ENCODE measurements at regions of chr9 and their contacts with region 1.

Region 1: DNA sequence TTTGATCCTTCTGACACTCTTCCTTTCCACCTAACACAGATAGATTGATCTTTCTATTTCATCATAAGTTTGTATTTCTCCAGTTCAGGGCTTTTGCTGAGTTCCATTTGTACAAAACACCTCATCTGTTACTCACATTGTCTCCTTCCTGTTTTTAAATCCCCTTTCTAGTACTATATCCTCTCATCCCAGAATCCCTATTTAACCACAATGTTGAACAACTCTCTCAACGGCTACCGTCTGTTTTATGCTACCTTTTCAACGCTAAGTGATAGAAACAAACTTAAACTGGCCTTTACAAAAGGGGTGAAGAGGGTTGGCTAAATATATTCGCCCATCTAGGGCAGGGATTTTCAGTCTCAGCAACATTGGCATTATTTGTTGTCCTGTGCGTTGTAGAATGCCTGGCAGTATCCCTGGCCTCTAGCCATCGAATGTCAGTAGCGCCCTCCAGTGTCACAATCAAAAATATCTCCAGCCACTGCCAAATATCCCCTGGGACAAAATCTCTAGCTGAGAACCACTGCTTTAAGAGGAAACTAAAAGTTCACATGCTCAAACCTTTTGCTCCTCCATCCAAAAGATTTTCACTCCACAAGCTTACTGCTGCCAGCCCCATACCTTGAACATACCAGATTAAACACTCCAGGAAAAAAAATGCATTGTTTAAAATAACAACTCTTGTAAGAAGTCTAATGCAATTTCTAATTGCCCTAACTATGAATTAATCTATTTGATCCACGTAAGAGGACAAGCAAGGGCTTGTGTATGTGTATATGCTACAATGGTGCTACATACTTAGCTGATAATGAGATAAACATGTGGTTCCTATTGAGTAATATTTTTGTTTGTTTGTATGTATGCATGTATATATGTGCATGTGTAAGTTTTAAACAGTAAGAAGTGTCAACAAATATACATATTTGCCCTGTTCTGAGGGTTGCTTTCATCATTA is 344.0 kb downstream of the PTPRD start:
- DNase-seq: peak; percentile 56
- H3K4me3 Mint-ChIP-seq: no peak overlapping the region
- H3K27ac Mint-ChIP-seq: no peak overlapping the region
- H3K4me1 Mint-ChIP-seq: no peaks in the 10 kb centered on the region
- H3K27me3 Mint-ChIP-seq: peaks cover 27% of the 10 kb centered on the region
- CTCF ChIP-seq: peak; percentile 39

Region 2: GRCh38 chr9:9998491-9999287 is 270.1 kb before region 1 on chr9:
- CTCF ChIA-PET with region 1: interaction called, 4 read pairs
- POLR2A ChIA-PET with region 1: no interaction called
- intact Hi-C with region 1: loop called (anchors 2 kb)
- DNase-seq: peak; percentile 36
- H3K4me3 Mint-ChIP-seq: no peak overlapping the region
- H3K27ac Mint-ChIP-seq: no peak overlapping the region
- H3K4me1 Mint-ChIP-seq: no peaks in the 10 kb centered on the region
- H3K27me3 Mint-ChIP-seq: peaks cover 72% of the 10 kb centered on the region
- CTCF ChIP-seq: peak; percentile 35

Region 3: DNA sequence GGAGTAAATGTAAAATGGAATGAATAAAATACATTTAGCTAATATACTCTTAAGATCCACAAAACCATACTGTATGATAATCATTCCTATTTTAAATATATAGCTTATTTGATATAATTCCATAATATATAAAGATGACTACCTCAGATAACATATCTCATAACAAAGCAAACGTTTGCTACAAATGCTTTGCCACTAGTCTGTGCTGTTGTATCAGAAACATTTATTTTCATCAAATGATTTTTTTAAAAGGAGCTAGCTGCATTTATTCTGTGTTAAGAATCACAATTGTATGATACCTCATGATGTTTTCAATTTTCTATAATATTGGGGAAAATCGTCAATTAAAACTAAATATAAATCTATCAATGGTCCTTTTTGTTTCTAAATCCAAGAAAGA is 223.2 kb before region 1 on chr9:
- CTCF ChIA-PET with region 1: interaction called, 4 read pairs
- POLR2A ChIA-PET with region 1: no interaction called
- intact Hi-C with region 1: loop called (anchors 1 kb)
- DNase-seq: peak; percentile 22
- H3K4me3 Mint-ChIP-seq: no peak overlapping the region
- H3K27ac Mint-ChIP-seq: no peak overlapping the region
- H3K4me1 Mint-ChIP-seq: no peaks in the 10 kb centered on the region
- H3K27me3 Mint-ChIP-seq: peaks cover 83% of the 10 kb centered on the region
- CTCF ChIP-seq: peak; percentile 38

Region 4: DNA sequence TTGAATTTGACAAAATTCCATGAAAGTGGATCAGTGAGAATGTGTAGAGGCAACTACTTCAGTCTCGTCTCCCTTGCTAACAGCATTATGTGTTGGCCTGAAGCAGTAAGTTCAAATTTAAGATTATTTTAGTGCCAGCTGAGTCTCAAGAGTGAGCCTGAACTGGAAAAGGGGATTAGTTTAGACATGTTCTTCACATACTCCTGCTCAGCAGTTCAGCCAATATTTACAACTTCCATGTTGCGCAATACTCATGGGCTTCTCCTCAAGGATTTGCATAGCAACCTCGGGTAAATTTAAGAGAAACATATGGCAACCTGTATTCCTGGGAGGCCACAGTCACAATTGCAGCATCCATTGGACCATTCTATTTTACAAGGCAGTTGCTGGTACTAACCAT is 209.8 kb before region 1 on chr9:
- CTCF ChIA-PET with region 1: interaction called, 3 read pairs
- POLR2A ChIA-PET with region 1: no interaction called
- intact Hi-C with region 1: loop called (anchors 1 kb)
- DNase-seq: peak; percentile 69
- H3K4me3 Mint-ChIP-seq: no peak overlapping the region
- H3K27ac Mint-ChIP-seq: no peak overlapping the region
- H3K4me1 Mint-ChIP-seq: peaks cover 12% of the 10 kb centered on the region
- H3K27me3 Mint-ChIP-seq: peaks cover 60% of the 10 kb centered on the region
- CTCF ChIP-seq: no peak

Region 5: GRCh38 chr9:10232352-10232930 is 36.4 kb before region 1 on chr9:
- CTCF ChIA-PET with region 1: interaction called, 3 read pairs
- POLR2A ChIA-PET with region 1: no interaction called
- intact Hi-C with region 1: loop called (anchors 1 kb)
- DNase-seq: peak; percentile 11
- H3K4me3 Mint-ChIP-seq: no peak overlapping the region
- H3K27ac Mint-ChIP-seq: no peak overlapping the region
- H3K4me1 Mint-ChIP-seq: no peaks in the 10 kb centered on the region
- H3K27me3 Mint-ChIP-seq: peaks cover 94% of the 10 kb centered on the region
- CTCF ChIP-seq: no peak

Region 6: GRCh38 chr9:10354591-10354990 is 85.8 kb after region 1 on chr9:
- CTCF ChIA-PET with region 1: no interaction called
- POLR2A ChIA-PET with region 1: no interaction called
- intact Hi-C with region 1: no loop called
- DNase-seq: no peak
- H3K4me3 Mint-ChIP-seq: no peak overlapping the region
- H3K27ac Mint-ChIP-seq: no peak overlapping the region
- H3K4me1 Mint-ChIP-seq: no peaks in the 10 kb centered on the region
- H3K27me3 Mint-ChIP-seq: peaks cover 60% of the 10 kb centered on the region
- CTCF ChIP-seq: no peak

Measured in MCF 10A (cell line).